ENCODE measurements at regions of chr22 and their contacts with region 1.

Region 1: GRCh38 chr22:36569999-36570398 is 41.0 kb upstream of the EIF3D start:
- DNase-seq: peak in 1 of 7 donors; percentile 3
- H3K4me3 ChIP-seq: no peak overlapping the region
- H3K27ac ChIP-seq: no peak overlapping the region
- H3K4me1 ChIP-seq: no peaks in the 10 kb centered on the region
- H3K27me3 ChIP-seq: no peaks in the 10 kb centered on the region
- CTCF ChIP-seq: no peak
- POLR2A ChIP-seq: no peak

Region 2: DNA sequence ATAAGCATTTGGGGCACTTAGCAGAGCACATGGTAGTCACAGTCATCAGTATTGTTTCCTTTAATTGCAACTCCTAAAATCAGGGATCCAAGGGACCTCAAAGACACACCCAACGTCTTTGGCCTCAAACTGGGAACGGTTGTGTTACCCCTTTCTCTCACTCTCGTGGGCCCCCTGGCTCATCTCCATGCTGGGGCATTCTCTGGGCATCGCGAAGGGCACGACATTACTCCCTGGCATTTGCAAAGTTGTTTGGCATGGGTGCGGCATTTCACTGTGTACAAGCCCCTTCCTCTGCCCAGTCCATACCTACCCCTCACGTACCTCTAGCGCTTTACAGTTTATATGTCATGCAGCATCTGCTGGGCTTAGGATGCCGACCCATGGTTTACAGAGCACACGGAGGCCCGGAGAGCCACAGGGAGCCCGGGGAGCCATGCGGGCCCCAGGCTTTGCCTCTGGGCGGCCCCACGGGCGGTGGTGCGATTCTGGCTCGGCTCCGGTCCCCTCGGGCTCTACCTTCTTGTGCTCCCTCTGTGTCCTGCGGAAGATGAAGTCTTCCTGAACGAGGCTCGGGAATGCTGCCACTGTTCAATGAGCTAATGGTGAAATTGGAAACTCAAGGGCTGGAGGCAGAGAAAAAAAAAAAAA is 155.5 kb after region 1 on chr22:
- intact Hi-C with region 1: loop called in 1 of 2 experiments (anchors 10 kb)
- DNase-seq: peak in 1 of 7 donors; percentile 11
- H3K4me3 ChIP-seq: no peak overlapping the region
- H3K27ac ChIP-seq: no peak overlapping the region
- H3K4me1 ChIP-seq: no peaks in the 10 kb centered on the region
- H3K27me3 ChIP-seq: peaks cover 10% of the 10 kb centered on the region
- CTCF ChIP-seq: no peak
- POLR2A ChIP-seq: no peak

Measured in adrenal gland (tissue), 19 donors.